ENCODE measurements at regions of chr6 and their contacts with region 1.

Region 1: DNA sequence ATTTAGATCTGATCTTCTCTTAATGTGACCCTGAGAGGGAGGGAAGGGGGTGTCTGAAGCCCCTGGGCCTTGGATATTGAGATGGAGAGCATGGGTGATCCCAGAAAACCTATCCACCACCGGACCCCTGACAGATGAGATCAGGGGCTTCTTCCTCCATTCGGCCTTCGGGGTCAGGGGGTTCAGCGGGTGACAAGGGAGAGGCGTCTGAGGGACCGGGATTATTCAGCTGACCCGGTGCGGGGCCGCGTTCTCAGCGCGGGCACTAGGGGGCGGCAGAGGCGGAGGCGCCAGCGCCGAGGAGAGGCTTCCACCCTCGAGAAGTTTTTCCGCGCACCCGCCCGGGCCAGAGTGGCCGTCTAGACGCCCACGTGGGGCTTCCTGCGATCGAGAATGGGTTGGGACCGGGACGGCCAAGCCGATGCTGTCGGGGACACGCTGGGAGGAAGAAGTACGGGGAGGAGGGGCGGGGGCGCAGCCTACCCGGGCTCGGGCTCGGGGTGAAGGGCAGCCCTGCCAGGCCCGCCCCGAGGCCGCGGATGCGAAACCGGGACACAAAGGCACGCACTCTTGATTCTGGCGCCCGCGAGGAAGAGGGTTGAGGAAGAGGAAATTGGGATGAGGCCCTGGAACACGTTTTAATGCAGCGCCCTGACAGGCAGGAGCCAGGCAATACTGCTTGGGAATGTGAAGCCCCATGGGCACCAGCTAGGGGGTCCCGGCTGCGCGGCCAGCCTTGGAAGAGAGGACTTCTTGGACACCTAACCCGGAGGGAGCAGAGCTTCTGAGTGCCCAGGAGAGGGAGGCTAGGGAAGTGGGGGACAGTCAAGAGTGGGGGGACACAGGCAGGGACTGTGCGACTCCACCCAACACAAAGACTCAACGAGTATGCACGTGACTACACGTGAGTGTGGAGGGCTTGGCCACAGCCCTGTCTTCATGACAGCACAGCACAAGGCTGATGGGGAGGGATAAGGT is 30.6 kb downstream of the COL11A2 start:
- DNase-seq: peak; percentile 92
- ATAC-seq: peak; percentile 94

Region 2: DNA sequence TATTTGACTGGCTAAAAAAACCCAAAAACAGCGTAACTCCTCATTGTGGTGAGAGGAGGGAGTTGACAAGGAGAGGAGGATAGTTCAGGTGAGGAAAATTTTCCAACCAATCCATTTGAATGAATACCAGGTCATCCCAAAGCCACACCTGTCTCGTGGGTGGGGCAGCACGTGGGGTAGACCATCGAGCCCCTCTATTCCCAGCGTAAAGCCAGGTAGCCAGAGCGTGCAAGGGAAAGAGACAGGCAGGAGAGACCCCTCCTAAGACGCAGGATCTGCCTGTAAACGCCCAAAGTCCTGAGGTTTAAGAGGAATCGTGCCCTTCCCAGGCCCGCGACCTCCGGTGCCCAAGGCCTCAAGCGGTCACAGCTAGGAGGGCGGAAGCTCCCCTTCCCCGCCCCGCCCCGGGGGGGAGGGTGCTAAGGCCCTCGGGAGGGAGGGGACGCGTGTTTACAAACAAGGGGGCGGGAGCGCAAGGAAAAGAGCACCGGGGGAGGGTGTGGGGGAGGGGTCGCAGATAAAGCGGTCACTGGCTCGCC is 38.1 kb after region 1 on chr6:
- intact Hi-C with region 1: loop called (anchors 5 kb)
- DNase-seq: no peak
- ATAC-seq: peak; percentile 2